CD4-positive, alpha-beta T cell (primary cell): ENCODE measurements at regions of chr4 and their contacts with region 1.

Region 1: GRCh38 chr4:37603070-37603468 is 83.1 kb downstream of the RELL1 start:
- DNase-seq: peak; percentile 57 to 83 (median 72)
- ATAC-seq: peak; percentile 61
- H3K4me3 ChIP-seq: no peak overlapping the region
- H3K4me3 Mint-ChIP-seq: no peak overlapping the region
- H3K27ac ChIP-seq: no peak overlapping the region
- H3K27ac Mint-ChIP-seq: no peak overlapping the region
- H3K4me1 ChIP-seq: peaks cover 8% of the 10 kb centered on the region
- H3K4me1 Mint-ChIP-seq: peaks cover 4% of the 10 kb centered on the region
- H3K27me3 ChIP-seq: no peaks in the 10 kb centered on the region
- H3K27me3 Mint-ChIP-seq: no peaks in the 10 kb centered on the region
- CTCF ChIP-seq: peak; percentile 98

Region 2: DNA sequence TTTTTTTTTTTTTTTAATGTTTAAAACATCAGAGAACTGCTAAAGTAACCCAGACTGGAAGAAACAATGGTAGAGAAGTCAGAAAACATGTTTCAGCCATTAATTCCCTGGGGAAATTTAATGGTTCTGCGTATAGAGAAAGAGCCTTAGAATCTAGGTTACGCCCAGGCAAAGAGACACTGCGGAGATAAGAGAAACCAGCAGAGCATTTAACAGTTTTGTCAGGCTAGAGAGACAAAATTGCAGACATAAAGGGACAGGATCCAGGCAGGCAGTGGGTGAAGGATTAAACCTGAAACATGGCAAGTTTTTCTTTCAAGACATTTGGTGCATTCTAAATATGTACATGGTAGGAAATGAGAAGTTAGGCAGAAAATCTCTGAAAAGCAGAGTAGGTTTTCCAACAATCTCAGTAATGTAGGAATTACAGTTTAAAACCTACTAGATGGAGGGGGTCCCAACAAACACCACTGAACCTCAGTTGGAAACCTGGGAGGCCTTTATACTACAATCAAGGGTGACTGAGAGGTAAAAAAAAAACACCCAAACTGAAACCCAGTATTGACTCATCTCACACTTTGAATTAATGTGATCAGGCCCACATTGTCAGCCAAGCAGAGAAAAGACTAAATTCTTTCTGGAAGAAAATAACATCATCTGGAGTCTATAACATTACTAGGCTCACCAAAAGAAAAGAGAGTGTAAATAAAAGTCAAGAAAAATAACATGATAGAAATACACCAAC is 612.8 kb before region 1 on chr4:
- CTCF ChIA-PET with region 1: no interaction called
- POLR2A ChIA-PET with region 1: no interaction called
- intact Hi-C with region 1: no loop called
- DNase-seq: no peak
- ATAC-seq: no peak
- H3K4me3 ChIP-seq: no peak overlapping the region
- H3K4me3 Mint-ChIP-seq: no peak overlapping the region
- H3K27ac ChIP-seq: no peak overlapping the region
- H3K27ac Mint-ChIP-seq: no peak overlapping the region
- H3K4me1 ChIP-seq: no peaks in the 10 kb centered on the region
- H3K4me1 Mint-ChIP-seq: no peaks in the 10 kb centered on the region
- H3K27me3 ChIP-seq: no peaks in the 10 kb centered on the region
- H3K27me3 Mint-ChIP-seq: no peaks in the 10 kb centered on the region
- CTCF ChIP-seq: no peak

Region 3: GRCh38 chr4:37244583-37245390 is 358.3 kb before region 1 on chr4 and contains the start of gene NWD2:
- CTCF ChIA-PET with region 1: no interaction called
- POLR2A ChIA-PET with region 1: no interaction called
- intact Hi-C with region 1: no loop called
- DNase-seq: no peak
- ATAC-seq: no peak
- H3K4me3 ChIP-seq: no peak within 1 kb of the TSS
- H3K4me3 Mint-ChIP-seq: no peak within 1 kb of the TSS
- H3K27ac ChIP-seq: no peak within 1 kb of the TSS
- H3K27ac Mint-ChIP-seq: no peak within 1 kb of the TSS
- H3K4me1 ChIP-seq: no peaks in the 10 kb centered on the region
- H3K4me1 Mint-ChIP-seq: no peaks in the 10 kb centered on the region
- H3K27me3 ChIP-seq: peaks cover 9 to 51% of the 10 kb centered on the region in 2 experiments
- H3K27me3 Mint-ChIP-seq: peaks cover 68% of the 10 kb centered on the region
- CTCF ChIP-seq: no peak
- total RNA-seq, gene NWD2: not detected

Region 4: GRCh38 chr4:37780444-37781150 is 177.5 kb after region 1 on chr4:
- CTCF ChIA-PET with region 1: interaction called, 3 read pairs
- POLR2A ChIA-PET with region 1: interaction called, 5 read pairs
- intact Hi-C with region 1: loop called (anchors 1 kb)
- DNase-seq: peak; percentile 39 to 87 (median 58)
- ATAC-seq: peak; percentile 99
- H3K4me3 ChIP-seq: no peak overlapping the region
- H3K4me3 Mint-ChIP-seq: peak overlapping the region; percentile 56
- H3K27ac ChIP-seq: peak overlapping the region; percentile 14 to 35
- H3K27ac Mint-ChIP-seq: peak overlapping the region; percentile 85
- H3K4me1 ChIP-seq: peaks cover 20% of the 10 kb centered on the region
- H3K4me1 Mint-ChIP-seq: peaks cover 28% of the 10 kb centered on the region
- H3K27me3 ChIP-seq: no peaks in the 10 kb centered on the region
- H3K27me3 Mint-ChIP-seq: no peaks in the 10 kb centered on the region
- CTCF ChIP-seq: peak; percentile 54

Region 5: GRCh38 chr4:37793562-37793961 is 190.5 kb after region 1 on chr4:
- CTCF ChIA-PET with region 1: interaction called, 9 read pairs
- POLR2A ChIA-PET with region 1: no interaction called
- intact Hi-C with region 1: loop called in 1 of 2 experiments (anchors 1 kb)
- DNase-seq: peak in 5 of 14 experiments; percentile 13 to 61 (median 37)
- ATAC-seq: peak; percentile 73
- H3K4me3 ChIP-seq: no peak overlapping the region
- H3K4me3 Mint-ChIP-seq: no peak overlapping the region
- H3K27ac ChIP-seq: no peak overlapping the region
- H3K27ac Mint-ChIP-seq: no peak overlapping the region
- H3K4me1 ChIP-seq: no peaks in the 10 kb centered on the region
- H3K4me1 Mint-ChIP-seq: no peaks in the 10 kb centered on the region
- H3K27me3 ChIP-seq: no peaks in the 10 kb centered on the region
- H3K27me3 Mint-ChIP-seq: no peaks in the 10 kb centered on the region
- CTCF ChIP-seq: peak; percentile 56

Region 6: DNA sequence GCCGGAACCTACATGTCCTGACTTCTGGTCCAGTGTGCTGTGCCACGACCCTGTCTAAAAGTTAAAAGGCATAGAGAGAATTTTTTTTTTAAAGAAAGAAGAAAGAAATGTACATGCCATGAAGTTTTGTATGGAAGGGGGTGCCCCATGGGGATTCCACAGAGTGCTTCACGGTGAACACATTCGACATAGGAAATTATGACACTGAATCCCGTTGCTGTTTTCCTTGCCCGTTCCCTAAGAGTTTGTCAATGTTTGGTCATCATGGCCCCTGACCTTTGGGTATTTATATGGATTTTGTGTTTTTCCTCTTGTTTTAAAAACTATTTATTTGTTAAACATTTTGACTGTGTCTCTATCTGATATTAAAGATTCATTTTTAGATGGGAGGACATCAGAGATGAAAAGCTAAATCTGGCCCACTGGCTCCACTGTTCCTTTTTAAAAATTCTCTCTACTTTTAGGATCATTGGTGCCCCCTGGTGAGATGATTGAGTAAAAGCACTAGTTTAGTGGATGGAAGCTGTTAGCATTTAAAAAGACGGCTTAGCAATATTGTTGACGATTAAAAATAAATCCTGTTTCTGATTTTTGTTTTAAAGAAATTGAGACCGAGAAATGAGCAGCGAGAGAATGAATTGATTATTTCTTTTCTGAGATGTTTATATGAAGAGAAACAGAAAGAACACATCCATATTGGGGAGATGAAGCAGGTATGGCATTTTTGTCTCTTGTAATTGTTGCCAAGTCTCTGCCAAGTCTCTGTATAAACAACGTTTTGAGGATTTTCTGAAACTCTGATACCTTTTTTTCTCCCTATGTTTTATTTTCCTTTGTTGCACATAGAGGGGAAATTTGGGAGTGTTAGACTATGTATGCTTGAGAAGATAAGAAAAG is 432.2 kb after region 1 on chr4:
- CTCF ChIA-PET with region 1: interaction called, 3 read pairs
- POLR2A ChIA-PET with region 1: no interaction called
- intact Hi-C with region 1: loop called (anchors 2 to 5 kb)
- DNase-seq: peak in 6 of 14 experiments; percentile 9 to 75 (median 62)
- ATAC-seq: peak; percentile 54
- H3K4me3 ChIP-seq: no peak overlapping the region
- H3K4me3 Mint-ChIP-seq: no peak overlapping the region
- H3K27ac ChIP-seq: no peak overlapping the region
- H3K27ac Mint-ChIP-seq: no peak overlapping the region
- H3K4me1 ChIP-seq: no peaks in the 10 kb centered on the region
- H3K4me1 Mint-ChIP-seq: no peaks in the 10 kb centered on the region
- H3K27me3 ChIP-seq: no peaks in the 10 kb centered on the region
- H3K27me3 Mint-ChIP-seq: no peaks in the 10 kb centered on the region
- CTCF ChIP-seq: peak; percentile 79